Head of caudate nucleus (tissue), 42 donors: ENCODE measurements at regions of chr19 and their contacts with region 1.

Region 1: GRCh38 chr19:41439441-41440222 is at the start of gene DMAC2:
- DNase-seq: peak; percentile 91 to 99 (median 96)

Region 2: DNA sequence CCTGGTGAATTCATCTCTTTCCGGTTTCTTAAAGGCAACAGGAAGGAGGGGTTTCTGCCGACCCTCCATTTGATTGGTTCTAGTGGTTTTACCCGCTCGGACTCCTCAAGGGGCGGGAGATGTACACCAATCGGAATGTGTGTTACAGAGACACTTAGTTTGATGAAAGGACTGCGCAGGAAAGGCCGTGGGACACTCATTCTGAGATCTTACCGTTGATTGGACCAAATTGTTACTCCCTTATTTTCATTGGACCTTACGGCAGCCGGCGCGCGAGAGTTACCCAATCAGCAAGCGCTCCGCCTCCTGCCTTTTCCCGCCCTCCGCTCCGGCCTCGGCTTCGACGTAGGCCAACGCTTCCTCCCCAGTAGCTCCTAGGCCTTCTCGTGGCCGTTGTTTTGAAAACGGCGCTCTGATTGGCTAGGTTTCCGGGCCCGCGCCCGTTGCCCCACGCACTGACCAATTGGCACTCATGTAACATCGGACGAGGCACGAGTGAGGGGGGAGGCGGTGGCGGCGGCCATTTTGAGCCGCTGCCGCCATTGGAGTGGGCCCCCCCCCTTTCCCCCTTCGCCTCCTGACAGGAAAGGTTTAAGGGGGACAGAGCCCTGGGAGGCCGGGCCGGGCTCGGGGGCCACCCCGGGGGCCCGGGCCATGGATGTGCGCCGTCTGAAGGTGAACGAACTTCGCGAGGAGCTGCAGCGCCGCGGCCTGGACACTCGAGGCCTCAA is 175.6 kb before region 1 on chr19 and contains the start of gene HNRNPUL1:
- intact Hi-C with region 1: loop called (anchors 10 kb)
- DNase-seq: peak; percentile 95 to 99 (median 98)

Region 3: GRCh38 chr19:41397086-41398049 is 42.3 kb before region 1 on chr19 and contains the starts of genes BCKDHA and EXOSC5:
- intact Hi-C with region 1: loop called (anchors 5 kb)
- DNase-seq: peak; percentile 97 to 100 (median 99)

Region 4: GRCh38 chr19:41570639-41571112 is 131.0 kb after region 1 on chr19:
- intact Hi-C with region 1: loop called (anchors 10 kb)
- DNase-seq: peak; percentile 46 to 85 (median 70)